Heart right ventricle (tissue), 16 donors: ENCODE measurements at regions of chr1 and their contacts with region 1.

Region 1: DNA sequence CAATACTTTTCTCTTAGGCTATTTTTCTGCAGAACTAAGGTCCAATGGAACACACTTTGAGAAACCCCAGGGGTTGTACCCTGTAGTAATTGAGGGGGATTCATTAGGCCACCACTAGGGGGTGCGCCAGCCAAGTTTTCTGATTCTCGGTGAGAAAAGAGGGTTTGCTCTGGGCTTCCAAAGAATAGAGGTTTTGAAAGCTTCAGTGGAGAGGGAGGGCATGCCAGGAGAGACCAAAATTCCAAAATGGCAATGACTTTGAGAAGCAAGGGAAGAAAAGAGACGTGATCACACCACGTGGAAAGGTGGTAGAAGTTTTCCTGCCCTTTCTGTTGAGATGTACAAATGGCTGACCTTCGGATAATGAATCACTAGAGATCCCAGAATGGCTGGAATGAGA is 323.3 kb downstream of the RPS6KC1 start:
- DNase-seq: peak; percentile 37 to 65
- ATAC-seq: peak in 7 of 8 donors; percentile 59 to 80 (median 68)
- H3K4me3 ChIP-seq: no peak overlapping the region
- H3K27ac ChIP-seq: no peak overlapping the region
- H3K4me1 ChIP-seq: no peaks in the 10 kb centered on the region
- H3K27me3 ChIP-seq: peaks cover 0 to 3% (median 0%) of the 10 kb centered on the region in 7 donors
- CTCF ChIP-seq: peak; percentile 59 to 89 (median 82)

Region 2: GRCh38 chr1:213244664-213245091 is 129.7 kb before region 1 on chr1:
- intact Hi-C with region 1: no loop called
- DNase-seq: peak in 1 of 2 donors; percentile 33
- ATAC-seq: no peak
- H3K4me3 ChIP-seq: no peak overlapping the region
- H3K27ac ChIP-seq: no peak overlapping the region
- H3K4me1 ChIP-seq: no peaks in the 10 kb centered on the region
- H3K27me3 ChIP-seq: no peaks in the 10 kb centered on the region
- CTCF ChIP-seq: peak; percentile 67 to 87 (median 79)

Region 3: DNA sequence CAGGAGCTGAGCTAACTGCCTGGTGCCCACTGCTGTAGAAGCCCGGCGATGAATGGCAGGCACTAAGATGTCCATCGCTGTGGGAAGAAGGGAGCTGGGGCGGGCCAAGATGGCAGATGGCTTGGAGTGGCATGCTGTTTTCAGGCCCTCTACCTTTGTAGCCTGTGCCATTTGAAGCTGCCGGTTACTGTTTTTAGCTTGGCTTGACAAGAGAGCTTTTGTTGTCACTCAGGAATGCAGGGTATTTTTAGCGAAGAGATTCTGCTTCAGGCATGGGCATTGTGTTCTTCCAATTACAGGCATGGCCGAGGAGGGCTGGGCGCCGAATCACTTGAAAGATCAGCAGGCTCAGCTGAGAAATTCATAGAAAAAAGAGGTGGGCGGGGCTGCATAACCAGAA is 25.3 kb after region 1 on chr1:
- intact Hi-C with region 1: no loop called
- DNase-seq: peak in 1 of 2 donors; percentile 38
- ATAC-seq: peak; percentile 69 to 96 (median 90)
- H3K4me3 ChIP-seq: peak overlapping the region in 1 of 10 donors; percentile 7
- H3K27ac ChIP-seq: peak overlapping the region in 7 of 10 donors; percentile 29 to 81 (median 74)
- H3K4me1 ChIP-seq: peaks cover 0 to 17% (median 7%) of the 10 kb centered on the region in 9 donors
- H3K27me3 ChIP-seq: no peaks in the 10 kb centered on the region
- CTCF ChIP-seq: no peak

Region 4: DNA sequence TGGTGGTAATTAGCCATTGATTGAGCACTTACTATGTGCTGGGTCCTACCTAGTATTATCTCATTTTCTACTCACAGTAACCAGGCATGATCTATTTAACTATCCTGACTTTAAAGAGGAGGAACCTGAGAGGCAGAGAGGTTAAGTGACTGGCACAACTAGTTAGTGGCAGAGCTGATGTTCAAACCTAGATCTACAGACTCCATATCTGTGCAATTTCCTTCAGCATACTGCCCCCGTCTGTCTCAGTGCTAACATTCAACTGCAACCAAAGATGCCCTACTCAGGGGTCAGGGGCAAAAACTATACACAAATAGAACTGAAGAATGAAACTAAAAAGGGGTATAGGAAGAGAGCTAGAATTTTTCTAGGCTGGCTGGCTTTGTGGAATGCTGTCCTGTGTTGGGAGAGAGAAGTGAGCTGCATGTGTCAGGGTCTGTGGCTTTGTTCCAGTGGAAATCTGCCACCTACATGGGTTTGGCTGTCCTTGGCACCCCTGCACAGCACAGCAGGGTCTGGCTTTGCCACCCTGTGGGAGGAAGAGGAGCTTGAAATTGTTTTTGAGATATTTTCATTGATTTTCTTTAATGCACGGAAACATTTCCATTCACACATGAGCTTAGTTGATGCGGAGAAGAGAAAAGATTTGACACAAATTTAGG is 45.1 kb after region 1 on chr1:
- intact Hi-C with region 1: loop called in 1 of 10 experiments (anchors 5 kb)
- DNase-seq: no peak
- ATAC-seq: no peak
- H3K4me3 ChIP-seq: no peak overlapping the region
- H3K27ac ChIP-seq: no peak overlapping the region
- H3K4me1 ChIP-seq: peaks cover 0 to 5% (median 0%) of the 10 kb centered on the region in 9 donors
- H3K27me3 ChIP-seq: peaks cover 0 to 7% (median 0%) of the 10 kb centered on the region in 7 donors
- CTCF ChIP-seq: peak in 2 of 9 donors; percentile 13 to 22

Region 5: GRCh38 chr1:213982672-213983492 is 608.5 kb after region 1 on chr1:
- intact Hi-C with region 1: loop called in 4 of 10 experiments (anchors 2 to 10 kb)
- DNase-seq: peak in 1 of 2 donors; percentile 46
- ATAC-seq: peak; percentile 25 to 65 (median 50)
- H3K4me3 ChIP-seq: peak overlapping the region; percentile 14 to 54 (median 44)
- H3K27ac ChIP-seq: peak overlapping the region in 1 of 10 donors; percentile 18
- H3K4me1 ChIP-seq: peaks cover 0 to 43% (median 17%) of the 10 kb centered on the region in 9 donors
- H3K27me3 ChIP-seq: peaks cover 5 to 100% (median 84%) of the 10 kb centered on the region in 7 donors
- CTCF ChIP-seq: peak in 2 of 9 donors; percentile 33 to 41

Region 6: GRCh38 chr1:213987927-213988506 is 613.6 kb after region 1 on chr1 and contains the start of gene PROX1:
- intact Hi-C with region 1: loop called in 5 of 10 experiments (anchors 2 to 10 kb)
- DNase-seq: no peak
- ATAC-seq: peak; percentile 18 to 88 (median 82)
- H3K4me3 ChIP-seq: peak within 1 kb of the TSS; percentile 49 to 70 (median 66)
- H3K27ac ChIP-seq: peak within 1 kb of the TSS; percentile 42 to 93 (median 85)
- H3K4me1 ChIP-seq: peaks cover 0 to 47% (median 19%) of the 10 kb centered on the region in 9 donors
- H3K27me3 ChIP-seq: peaks cover 5 to 94% (median 44%) of the 10 kb centered on the region in 7 donors
- CTCF ChIP-seq: no peak
- total RNA-seq, gene PROX1: 52.6 to 132 (median 116) TPM

Region 7: GRCh38 chr1:213993929-213994328 is 619.6 kb after region 1 on chr1:
- intact Hi-C with region 1: loop called in 3 of 10 experiments (anchors 5 to 10 kb)
- DNase-seq: no peak
- ATAC-seq: peak in 1 of 8 donors; percentile 23
- H3K4me3 ChIP-seq: no peak overlapping the region
- H3K27ac ChIP-seq: peak overlapping the region in 5 of 10 donors; percentile 9 to 30 (median 19)
- H3K4me1 ChIP-seq: peaks cover 0 to 31% (median 14%) of the 10 kb centered on the region in 9 donors
- H3K27me3 ChIP-seq: peaks cover 0 to 39% (median 5%) of the 10 kb centered on the region in 7 donors
- CTCF ChIP-seq: no peak